CD8-positive, alpha-beta memory T cell (primary cell): ENCODE measurements at regions of chr16 and their contacts with region 1.

Region 1: DNA sequence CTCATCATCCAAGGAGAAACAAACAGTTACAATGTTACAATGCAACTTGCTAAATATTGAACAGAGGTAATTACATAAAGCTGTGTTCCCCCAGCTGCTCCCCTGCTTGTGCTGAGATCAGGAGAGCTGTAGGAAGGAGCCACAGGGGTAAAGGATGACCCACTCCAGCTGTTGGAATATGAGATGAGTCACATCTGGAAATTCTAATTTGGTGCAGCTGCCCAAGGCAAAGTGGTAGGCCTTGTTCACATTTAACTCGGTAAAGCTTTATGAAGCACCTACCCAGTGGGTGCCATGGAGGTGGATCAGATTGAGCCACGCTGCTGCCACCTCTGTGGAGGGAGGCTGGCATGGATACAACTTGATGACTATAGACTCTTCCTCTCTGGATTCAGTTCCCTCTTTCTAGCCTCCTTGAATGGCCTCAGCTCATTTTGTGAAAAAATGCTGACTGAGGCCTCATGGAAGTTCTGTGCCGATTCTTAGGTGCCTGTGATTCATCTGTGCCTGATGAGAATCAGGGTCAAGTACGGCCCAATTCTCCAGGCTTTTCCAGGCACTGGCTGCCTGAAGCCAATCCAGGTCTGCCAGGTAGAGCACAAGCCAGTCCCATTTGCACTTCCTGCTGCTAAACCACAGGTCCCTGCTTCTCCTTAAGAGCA is 7.4 kb downstream of the ZNF689 start:
- DNase-seq: no peak
- H3K4me3 ChIP-seq: no peak overlapping the region
- H3K4me3 Mint-ChIP-seq: no peak overlapping the region
- H3K27ac ChIP-seq: no peak overlapping the region
- H3K27ac Mint-ChIP-seq: peak overlapping the region in 2 of 8 donors; percentile 23 to 56
- H3K4me1 ChIP-seq: no peaks in the 10 kb centered on the region
- H3K4me1 Mint-ChIP-seq: peaks cover 4% of the 10 kb centered on the region in 3 donors
- H3K27me3 ChIP-seq: no peaks in the 10 kb centered on the region
- H3K27me3 Mint-ChIP-seq: no peaks in the 10 kb centered on the region

Region 2: GRCh38 chr16:30585400-30586189 is 17.2 kb before region 1 on chr16 and contains the start of gene ZNF785:
- CTCF ChIA-PET with region 1: interaction called, 10 read pairs
- POLR2A ChIA-PET with region 1: interaction called, 4 read pairs
- DNase-seq: peak; percentile 83 to 96 (median 92)
- H3K4me3 ChIP-seq: peak within 1 kb of the TSS; percentile 95
- H3K4me3 Mint-ChIP-seq: peak within 1 kb of the TSS; percentile 81 to 91 (median 88)
- H3K27ac ChIP-seq: peak within 1 kb of the TSS; percentile 71
- H3K27ac Mint-ChIP-seq: peak within 1 kb of the TSS; percentile 72 to 92 (median 90)
- H3K4me1 ChIP-seq: peaks cover 12% of the 10 kb centered on the region
- H3K4me1 Mint-ChIP-seq: peaks cover 24 to 32% (median 29%) of the 10 kb centered on the region in 3 donors
- H3K27me3 ChIP-seq: no peaks in the 10 kb centered on the region
- H3K27me3 Mint-ChIP-seq: peaks cover 0 to 3% of the 10 kb centered on the region in 2 donors
- total RNA-seq, gene ZNF785: 10.9 to 13.0 TPM